ENCODE measurements at regions of chr4 and their contacts with region 1.

Region 1: DNA sequence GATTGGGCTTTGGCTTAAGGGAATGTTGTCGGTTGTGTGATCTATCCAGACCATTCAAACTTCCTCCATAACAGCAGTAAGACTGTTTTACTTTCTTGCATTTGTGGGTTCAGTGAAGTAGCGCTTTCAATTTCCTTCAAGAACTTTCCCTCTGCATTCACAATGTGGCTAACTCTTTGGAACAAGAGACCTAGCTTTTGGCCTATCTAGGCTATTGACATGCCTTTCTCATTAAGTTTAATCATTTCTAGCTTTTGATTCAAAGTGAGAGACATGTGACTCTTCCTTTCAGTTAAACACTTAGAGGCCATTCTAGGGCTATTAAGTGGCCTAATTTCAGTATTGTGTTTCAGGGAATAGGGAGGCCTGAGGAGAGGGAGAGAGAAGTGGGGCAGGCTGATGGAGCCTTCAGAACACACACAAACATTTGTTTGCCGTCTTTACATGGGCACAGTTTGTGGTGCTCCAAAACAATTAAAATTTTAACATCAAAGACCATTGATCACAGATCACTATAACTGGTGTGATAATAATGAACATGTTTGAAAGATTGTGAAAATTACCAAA is 34.1 kb downstream of the ADH5 start:
- DNase-seq: no peak
- ATAC-seq: no peak
- H3K4me3 ChIP-seq: no peak overlapping the region
- H3K27ac ChIP-seq: no peak overlapping the region
- H3K4me1 ChIP-seq: peaks cover 11% of the 10 kb centered on the region
- H3K27me3 ChIP-seq: no peaks in the 10 kb centered on the region
- CTCF ChIP-seq: no peak

Region 2: GRCh38 chr4:98995183-98996055 is 59.1 kb before region 1 on chr4 and contains the start of gene METAP1:
- CTCF ChIA-PET with region 1: interaction called, 9 read pairs
- POLR2A ChIA-PET with region 1: no interaction called
- in situ Hi-C with region 1: no loop called
- intact Hi-C with region 1: loop called (anchors 5 kb)
- DNase-seq: peak; percentile 64
- ATAC-seq: peak; percentile 94
- H3K4me3 ChIP-seq: peak within 1 kb of the TSS; percentile 73 to 81
- H3K27ac ChIP-seq: peak within 1 kb of the TSS; percentile 82
- H3K4me1 ChIP-seq: peaks cover 12% of the 10 kb centered on the region
- H3K27me3 ChIP-seq: no peaks in the 10 kb centered on the region
- CTCF ChIP-seq: peak; percentile 82
- total RNA-seq, gene METAP1: 51.9 TPM